ENCODE measurements at regions of chr11 and their contacts with region 1.

Region 1: GRCh38 chr11:36672813-36673450 is 74.9 kb upstream of the RAG2 start:
- DNase-seq: no peak
- H3K4me3 ChIP-seq: no peak overlapping the region
- H3K27ac ChIP-seq: no peak overlapping the region
- H3K4me1 ChIP-seq: peaks cover 7% of the 10 kb centered on the region
- H3K27me3 ChIP-seq: no peaks in the 10 kb centered on the region
- CTCF ChIP-seq: peak; percentile 90

Region 2: DNA sequence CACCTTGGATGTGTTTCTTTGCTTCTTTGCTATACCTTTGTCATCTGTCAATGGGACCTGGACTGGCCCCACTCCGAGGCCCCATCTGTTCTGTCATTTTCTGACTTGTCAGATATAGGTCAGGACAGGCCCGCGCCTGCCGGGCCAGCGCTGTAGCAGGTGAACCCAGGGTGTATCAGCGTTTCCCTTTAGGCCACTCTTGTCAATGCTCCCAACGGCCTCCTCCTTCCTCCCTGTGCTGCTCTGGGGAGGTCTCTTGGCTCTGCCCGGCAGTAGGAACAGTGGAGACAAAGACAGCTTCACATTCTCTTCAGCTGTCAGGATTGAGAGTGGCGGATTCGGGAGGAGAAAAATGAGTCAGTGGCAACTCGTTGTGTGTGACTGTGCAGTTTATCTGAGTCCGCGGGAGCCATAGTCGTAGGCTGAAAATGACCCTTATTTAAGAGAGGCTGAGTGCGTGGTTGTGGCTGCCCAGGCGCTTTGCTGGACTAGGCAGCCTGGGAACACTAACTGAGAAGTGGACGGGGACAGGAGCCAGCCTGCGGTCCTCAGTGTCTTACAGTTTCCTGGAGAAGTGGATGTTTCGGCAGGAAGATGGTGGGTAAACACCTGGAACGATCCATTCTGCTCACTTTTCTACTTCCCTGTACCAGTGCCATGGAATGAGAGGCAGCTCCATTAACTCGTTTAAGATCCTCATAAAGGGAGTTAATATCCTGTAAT is 274.5 kb before region 1 on chr11:
- intact Hi-C with region 1: no loop called
- DNase-seq: no peak
- H3K4me3 ChIP-seq: no peak overlapping the region
- H3K27ac ChIP-seq: no peak overlapping the region
- H3K4me1 ChIP-seq: peaks cover 9% of the 10 kb centered on the region
- H3K27me3 ChIP-seq: no peaks in the 10 kb centered on the region
- CTCF ChIP-seq: no peak

Region 3: DNA sequence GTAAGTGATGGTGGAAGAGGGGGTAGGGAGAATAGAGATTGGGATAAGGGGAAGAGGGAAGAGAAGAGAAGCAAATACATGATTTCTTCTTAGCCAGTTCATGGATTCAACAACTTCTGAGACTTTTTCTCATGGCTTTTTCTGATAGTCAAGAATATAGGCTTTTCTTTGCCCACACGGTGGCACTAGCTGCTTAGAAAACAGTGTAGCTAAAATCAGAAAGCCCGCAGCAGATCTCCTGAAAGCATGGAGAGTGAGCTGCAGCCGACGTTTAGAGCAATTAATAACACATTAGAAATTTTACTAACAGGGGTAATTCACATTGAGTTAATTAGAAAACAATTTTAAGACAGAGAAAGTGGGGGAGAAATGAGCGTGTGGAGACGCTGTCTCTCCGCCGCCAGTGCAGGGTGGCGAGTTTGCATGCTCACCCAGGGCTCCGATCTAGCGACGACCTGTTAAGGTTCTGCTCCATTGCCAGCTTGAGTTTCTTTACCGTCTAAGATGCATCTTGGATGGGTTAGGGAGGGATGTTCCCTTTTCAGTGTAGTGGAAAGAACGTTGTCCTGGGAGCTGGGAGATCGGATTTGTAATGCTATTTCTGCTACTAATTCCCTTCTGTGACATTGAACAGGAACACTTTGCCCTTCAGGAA is 108.4 kb before region 1 on chr11:
- intact Hi-C with region 1: loop called (anchors 5 kb)
- DNase-seq: no peak
- H3K4me3 ChIP-seq: peak overlapping the region; percentile 62
- H3K27ac ChIP-seq: no peak overlapping the region
- H3K4me1 ChIP-seq: peaks cover 5% of the 10 kb centered on the region
- H3K27me3 ChIP-seq: no peaks in the 10 kb centered on the region
- CTCF ChIP-seq: peak; percentile 77

Region 4: DNA sequence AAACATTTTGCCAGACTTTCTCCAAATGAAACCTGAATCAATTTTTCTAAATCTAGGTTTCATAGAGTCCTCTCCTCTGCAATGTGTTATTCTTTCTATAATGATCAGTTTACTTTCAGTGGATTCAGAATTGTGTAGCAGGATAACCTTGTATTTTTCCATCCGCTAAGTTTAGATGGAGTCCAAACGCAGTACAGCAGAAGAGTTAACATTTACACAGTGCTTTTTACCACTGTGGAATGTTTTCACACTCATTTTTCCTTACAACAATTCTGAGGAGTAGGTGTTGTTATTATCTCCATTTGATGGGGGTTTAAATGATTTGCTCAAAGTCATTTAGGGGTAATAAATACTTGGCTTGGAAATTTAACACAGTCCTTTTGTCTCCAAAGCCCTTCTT is 95.6 kb before region 1 on chr11:
- intact Hi-C with region 1: no loop called
- DNase-seq: no peak
- H3K4me3 ChIP-seq: no peak overlapping the region
- H3K27ac ChIP-seq: no peak overlapping the region
- H3K4me1 ChIP-seq: peaks cover 17% of the 10 kb centered on the region
- H3K27me3 ChIP-seq: no peaks in the 10 kb centered on the region
- CTCF ChIP-seq: no peak

Region 5: GRCh38 chr11:36622431-36623136 is 50.3 kb before region 1 on chr11:
- intact Hi-C with region 1: loop called (anchors 5 kb)
- DNase-seq: no peak
- H3K4me3 ChIP-seq: no peak overlapping the region
- H3K27ac ChIP-seq: no peak overlapping the region
- H3K4me1 ChIP-seq: peaks cover 19% of the 10 kb centered on the region
- H3K27me3 ChIP-seq: no peaks in the 10 kb centered on the region
- CTCF ChIP-seq: peak; percentile 66

Measured in left ventricle myocardium inferior (tissue), 1 donor.